ENCODE measurements at regions of chr1 and their contacts with region 1.

Region 1: GRCh38 chr1:149886396-149887195 is 12.8 kb upstream of the BOLA1 start:
- DNase-seq: peak; percentile 91

Region 2: DNA sequence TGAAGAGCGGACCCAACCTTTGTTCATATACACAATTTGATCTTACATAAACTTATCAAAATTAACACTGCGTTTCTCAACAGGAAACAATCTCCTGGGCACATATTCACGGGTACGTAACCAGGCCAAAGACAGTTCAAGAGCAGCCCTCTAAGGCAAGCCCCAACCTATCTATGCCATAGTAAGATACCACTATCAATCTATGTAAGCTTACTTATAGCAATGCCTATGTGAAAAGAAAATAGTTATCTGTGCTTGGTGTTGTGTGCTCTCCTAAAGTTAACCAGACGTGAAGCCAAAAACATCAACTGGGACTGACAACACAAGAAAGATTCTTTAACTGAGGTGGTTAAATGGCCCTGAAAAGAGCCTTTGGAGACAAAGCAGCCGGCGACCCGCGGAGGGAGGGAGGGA is 36.6 kb before region 1 on chr1:
- CTCF ChIA-PET with region 1: interaction called, 3 read pairs
- POLR2A ChIA-PET with region 1: interaction called, 58 read pairs
- DNase-seq: no peak

Region 3: DNA sequence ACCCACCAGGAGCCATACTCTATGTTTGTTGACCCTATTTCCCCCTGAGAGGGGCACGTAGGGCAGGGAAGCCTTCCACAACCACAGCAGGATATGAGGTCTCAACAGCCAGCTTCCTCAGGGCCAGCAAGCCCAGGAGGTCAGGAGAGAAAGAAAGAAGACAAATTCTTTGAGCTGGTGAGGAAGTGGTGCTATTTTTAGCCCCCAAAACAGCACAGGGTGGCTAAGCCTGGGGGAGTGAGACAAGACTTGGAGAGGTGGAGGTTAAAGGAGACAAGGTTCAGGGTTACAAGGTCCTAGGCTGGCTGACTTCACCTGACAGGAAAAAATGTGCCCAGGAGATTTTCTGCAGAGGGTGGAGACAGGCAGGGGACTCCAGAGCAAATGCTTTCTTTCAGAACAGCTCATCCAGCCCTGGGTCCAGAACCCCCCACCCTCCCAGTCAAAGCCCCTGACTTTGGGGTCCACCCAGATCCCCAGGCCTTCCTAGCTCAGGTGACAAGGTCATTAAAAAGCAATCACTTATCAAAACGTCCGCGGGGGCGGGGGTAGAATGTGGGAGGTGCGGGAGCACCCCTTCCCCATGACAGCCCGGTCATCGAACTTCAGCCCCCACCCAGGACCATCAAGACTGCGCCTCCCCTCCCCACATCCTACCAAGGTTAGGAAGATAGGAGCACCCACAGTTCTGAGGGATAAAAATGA is 29.7 kb after region 1 on chr1:
- CTCF ChIA-PET with region 1: no interaction called
- POLR2A ChIA-PET with region 1: interaction called, 23 read pairs
- DNase-seq: no peak

Region 4: DNA sequence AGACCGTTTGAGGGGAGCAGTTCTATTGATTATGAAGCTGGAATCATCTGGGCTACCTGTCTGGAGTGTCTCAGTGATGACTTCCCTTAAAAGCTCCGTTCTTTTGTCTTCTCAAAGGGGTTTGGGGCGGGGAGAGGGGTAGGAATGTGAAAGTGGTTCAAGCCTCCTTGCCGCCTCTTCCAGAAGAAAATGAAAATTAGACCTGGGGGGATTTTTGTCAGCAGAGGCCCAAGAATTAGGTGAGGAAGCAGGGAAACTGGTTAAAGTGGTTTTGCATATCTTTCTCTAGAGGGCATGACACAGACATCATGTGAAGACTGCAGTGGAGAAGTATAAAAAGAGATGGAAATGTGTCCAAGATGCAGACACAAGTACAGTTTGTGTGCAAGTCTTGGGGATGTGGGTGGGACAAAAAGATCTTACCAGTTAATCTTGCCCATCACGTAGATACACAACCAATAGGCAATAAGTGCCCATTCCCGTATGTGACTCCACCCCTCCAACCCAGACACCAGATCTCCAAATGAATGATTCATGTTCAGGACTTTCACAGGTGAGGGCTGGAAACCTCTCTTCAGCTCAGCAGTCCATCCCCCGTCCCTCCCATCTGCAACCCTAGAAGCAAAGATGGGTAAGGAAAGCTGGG is 50.6 kb after region 1 on chr1:
- CTCF ChIA-PET with region 1: interaction called, 4 read pairs
- POLR2A ChIA-PET with region 1: interaction called, 133 read pairs
- DNase-seq: no peak

Region 5: DNA sequence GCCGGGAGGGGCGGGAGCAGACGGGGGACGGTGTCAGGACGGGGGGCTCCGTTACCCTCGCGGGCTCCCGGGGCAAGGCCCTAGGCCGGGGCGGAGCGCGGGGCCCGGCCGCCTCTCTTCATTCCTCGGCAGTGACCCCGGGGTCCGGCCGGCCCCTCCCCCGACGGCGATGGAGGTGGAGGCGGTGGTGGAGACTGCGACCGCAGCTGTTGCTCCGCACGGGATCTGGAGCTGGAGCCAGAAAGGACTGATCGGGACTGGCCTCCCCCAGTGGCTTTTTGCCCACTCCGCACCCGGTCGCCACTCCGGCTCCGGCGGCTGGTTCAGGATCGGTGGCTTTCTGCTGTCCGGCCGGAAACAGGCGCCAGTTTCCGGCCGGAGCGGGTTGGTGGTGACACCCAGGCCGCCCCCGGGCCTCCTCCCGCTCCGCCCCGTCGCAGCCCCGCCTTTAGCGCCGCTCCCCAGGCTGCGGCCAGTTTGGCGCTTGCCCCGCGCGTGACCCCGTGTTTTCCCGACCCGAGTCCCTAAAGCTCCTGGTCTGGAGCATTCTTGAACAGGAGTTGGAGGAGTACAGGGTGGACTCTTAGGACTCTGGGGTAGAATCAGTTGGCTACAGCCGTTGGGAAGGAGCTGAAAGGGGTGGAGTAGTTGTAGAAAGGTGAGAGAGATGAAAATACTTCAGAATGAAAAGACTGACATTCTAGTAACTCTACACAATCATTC is 124.0 kb after region 1 on chr1 and contains the start of gene OTUD7B:
- CTCF ChIA-PET with region 1: no interaction called
- POLR2A ChIA-PET with region 1: interaction called, 33 read pairs
- DNase-seq: peak; percentile 92

Region 6: GRCh38 chr1:150102986-150103385 is 216.4 kb after region 1 on chr1:
- CTCF ChIA-PET with region 1: no interaction called
- POLR2A ChIA-PET with region 1: no interaction called
- DNase-seq: no peak

Region 7: DNA sequence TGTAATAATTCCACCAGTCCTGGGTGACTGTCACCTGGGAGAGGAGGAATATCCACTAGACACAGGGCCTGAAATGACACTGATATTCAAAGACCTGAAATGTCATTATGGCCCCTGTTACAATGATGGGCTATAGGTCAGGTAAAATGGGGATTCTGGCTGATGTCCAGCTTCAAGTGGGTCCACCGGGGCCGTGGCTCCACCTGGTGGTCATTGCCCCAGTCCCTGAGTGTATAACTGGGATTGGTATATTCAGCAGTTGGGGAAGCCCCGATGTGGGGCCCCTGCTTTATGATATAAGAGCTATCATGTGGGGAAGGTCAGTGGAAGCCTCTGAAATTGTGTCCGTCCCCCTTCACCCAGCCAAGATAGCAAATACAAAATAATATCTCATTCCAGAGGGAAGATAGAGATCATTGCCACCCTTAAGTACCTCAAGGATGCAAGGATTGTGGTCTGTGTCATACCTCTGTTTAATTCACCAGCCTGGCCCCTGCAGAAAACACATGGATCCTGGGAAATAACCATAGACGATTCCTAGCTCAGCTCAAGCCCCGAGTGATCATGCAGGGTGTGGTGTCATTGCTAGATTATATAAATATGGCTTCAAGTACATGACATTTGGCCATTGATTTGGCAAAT is 282.5 kb after region 1 on chr1:
- CTCF ChIA-PET with region 1: no interaction called
- POLR2A ChIA-PET with region 1: interaction called, 14 read pairs
- DNase-seq: peak; percentile 77

Measured in HEK293T (cell line).